K562 (cell line): ENCODE measurements at regions of chr7 and their contacts with region 1.

Region 1: DNA sequence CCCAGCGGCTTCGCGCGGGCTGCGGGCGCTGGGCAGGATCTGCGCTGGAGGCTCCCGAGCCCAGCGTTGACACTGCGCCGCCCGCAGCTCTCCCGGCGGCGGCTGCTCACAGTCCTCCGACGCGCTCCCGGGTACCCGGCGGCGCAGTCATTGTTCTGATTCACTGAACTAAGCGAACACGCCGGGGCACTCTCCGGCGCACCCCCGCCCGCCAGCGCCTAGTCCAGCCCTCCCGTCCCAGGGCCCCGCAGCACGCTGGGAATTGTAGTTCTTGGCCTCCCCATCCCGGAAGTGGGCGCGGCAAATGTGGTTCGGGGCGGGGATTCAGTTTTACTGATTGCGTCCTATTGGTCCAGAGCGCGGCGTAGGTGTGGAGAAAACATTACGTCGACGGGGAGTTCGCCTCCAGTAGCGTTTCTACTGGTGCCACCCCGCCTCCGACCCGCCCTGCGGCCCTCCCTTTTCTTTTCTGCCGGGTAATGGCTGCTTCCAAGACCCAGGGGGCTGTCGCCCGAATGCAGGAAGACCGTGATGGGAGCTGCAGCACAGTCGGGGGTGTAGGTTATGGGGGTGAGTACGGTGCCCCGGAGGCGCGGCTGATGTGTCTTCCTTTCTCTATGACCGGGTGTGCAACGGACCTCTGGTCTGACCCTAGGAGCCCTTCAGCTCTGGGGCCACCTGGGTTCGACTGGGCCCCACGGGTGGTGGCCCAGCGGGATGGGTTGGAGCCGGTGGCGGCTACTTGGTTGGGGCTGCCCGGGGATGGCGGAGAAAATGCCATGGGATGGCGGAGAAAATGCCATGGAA is at the starts of genes DOCK4 and ZNF277:
- DNase-seq: peak; percentile 98 to 100 (median 98)
- ATAC-seq: peak; percentile 97
- H3K4me3 ChIP-seq: peak within 1 kb of the TSS; percentile 79
- H3K27ac ChIP-seq: peak within 1 kb of the TSS; percentile 52
- H3K4me1 ChIP-seq: peaks cover 12 to 16% of the 10 kb centered on the region in 2 experiments; a peak in 4 of 5 replicates
- H3K27me3 ChIP-seq: peaks cover 23 to 24% of the 10 kb centered on the region in 2 experiments
- CTCF ChIP-seq: peak in 1 of 3 experiments; percentile 10; a peak in 1 of 6 replicates
- EP300 ChIP-seq: no peak; the same call in 1 of the 2 replicates
- POLR2A ChIP-seq: peak; percentile 80
- RAD21 ChIP-seq: no peak
- polyA plus RNA-seq, gene DOCK4: 0.42 to 0.45 TPM
- polyA plus RNA-seq, gene ZNF277: 27.4 to 27.7 TPM

Region 2: GRCh38 chr7:112414855-112415490 is 208.5 kb after region 1 on chr7:
- CTCF ChIA-PET with region 1: no interaction called
- POLR2A ChIA-PET with region 1: no interaction called
- in situ Hi-C with region 1: no loop called
- intact Hi-C with region 1: loop called (anchors 10 kb)
- DNase-seq: peak; percentile 56 to 76 (median 68)
- ATAC-seq: peak; percentile 94
- H3K4me3 ChIP-seq: no peak overlapping the region
- H3K27ac ChIP-seq: no peak overlapping the region
- H3K4me1 ChIP-seq: no peaks in the 10 kb centered on the region
- H3K27me3 ChIP-seq: peaks cover 0 to 9% of the 10 kb centered on the region in 2 experiments; a peak in 2 of 5 replicates
- CTCF ChIP-seq: peak; percentile 63 to 82 (median 63)
- EP300 ChIP-seq: no peak
- POLR2A ChIP-seq: no peak
- RAD21 ChIP-seq: peak; percentile 84 to 86